ENCODE measurements at regions of chr10 and their contacts with region 1.

Region 1: GRCh38 chr10:26503911-26504310 is 65.8 kb downstream of the APBB1IP start:
- DNase-seq: peak; percentile 69
- H3K4me3 Mint-ChIP-seq: no peak overlapping the region
- H3K27ac Mint-ChIP-seq: peak overlapping the region; percentile 69
- H3K4me1 Mint-ChIP-seq: peaks cover 12% of the 10 kb centered on the region
- H3K27me3 Mint-ChIP-seq: no peaks in the 10 kb centered on the region

Region 2: GRCh38 chr10:25959540-25960232 is 544.2 kb before region 1 on chr10:
- CTCF ChIA-PET with region 1: no interaction called
- intact Hi-C with region 1: no loop called
- DNase-seq: no peak
- H3K4me3 Mint-ChIP-seq: no peak overlapping the region
- H3K27ac Mint-ChIP-seq: no peak overlapping the region
- H3K4me1 Mint-ChIP-seq: no peaks in the 10 kb centered on the region
- H3K27me3 Mint-ChIP-seq: peaks cover 9% of the 10 kb centered on the region

Region 3: GRCh38 chr10:26334932-26335573 is 168.9 kb before region 1 on chr10:
- CTCF ChIA-PET with region 1: interaction called, 6 read pairs
- intact Hi-C with region 1: loop called (anchors 1 kb)
- DNase-seq: peak; percentile 76
- H3K4me3 Mint-ChIP-seq: peak overlapping the region; percentile 71
- H3K27ac Mint-ChIP-seq: peak overlapping the region; percentile 48
- H3K4me1 Mint-ChIP-seq: peaks cover 8% of the 10 kb centered on the region
- H3K27me3 Mint-ChIP-seq: no peaks in the 10 kb centered on the region

Region 4: DNA sequence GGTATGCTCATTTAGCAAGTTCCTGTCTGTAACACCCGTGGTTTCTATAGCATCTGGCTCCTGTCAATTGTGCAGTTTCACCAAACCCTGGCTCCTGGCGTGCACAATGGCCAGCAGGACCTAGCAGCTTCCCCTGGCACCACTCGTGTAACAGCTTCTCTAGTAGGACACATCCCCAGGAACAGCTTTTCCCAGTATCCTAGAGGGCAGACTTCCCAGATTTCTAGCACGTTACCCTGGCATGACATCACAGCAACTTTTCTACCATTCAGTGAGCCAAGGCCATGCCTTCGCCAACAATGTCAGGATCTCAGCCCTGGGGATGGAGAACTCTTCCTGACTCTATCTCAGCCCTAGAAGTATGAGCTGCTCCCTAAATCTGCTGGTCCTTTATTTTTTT is 643.8 kb after region 1 on chr10:
- CTCF ChIA-PET with region 1: no interaction called
- intact Hi-C with region 1: no loop called
- DNase-seq: no peak
- H3K4me3 Mint-ChIP-seq: no peak overlapping the region
- H3K27ac Mint-ChIP-seq: no peak overlapping the region
- H3K4me1 Mint-ChIP-seq: peaks cover 57% of the 10 kb centered on the region
- H3K27me3 Mint-ChIP-seq: no peaks in the 10 kb centered on the region